T-cell (primary cell): ENCODE measurements at regions of chr2 and their contacts with region 1.

Region 1: GRCh38 chr2:136176722-136177397 is 58.9 kb upstream of the CXCR4 start:
- DNase-seq: no peak
- ATAC-seq: no peak
- H3K4me3 ChIP-seq: no peak overlapping the region
- H3K4me3 Mint-ChIP-seq: no peak overlapping the region
- H3K27ac ChIP-seq: no peak overlapping the region
- H3K27ac Mint-ChIP-seq: no peak overlapping the region
- H3K4me1 ChIP-seq: peaks cover 0 to 6% of the 10 kb centered on the region in 2 experiments
- H3K4me1 Mint-ChIP-seq: peaks cover 25 to 34% (median 33%) of the 10 kb centered on the region in 3 donors
- H3K27me3 ChIP-seq: no peaks in the 10 kb centered on the region
- H3K27me3 Mint-ChIP-seq: no peaks in the 10 kb centered on the region

Region 2: DNA sequence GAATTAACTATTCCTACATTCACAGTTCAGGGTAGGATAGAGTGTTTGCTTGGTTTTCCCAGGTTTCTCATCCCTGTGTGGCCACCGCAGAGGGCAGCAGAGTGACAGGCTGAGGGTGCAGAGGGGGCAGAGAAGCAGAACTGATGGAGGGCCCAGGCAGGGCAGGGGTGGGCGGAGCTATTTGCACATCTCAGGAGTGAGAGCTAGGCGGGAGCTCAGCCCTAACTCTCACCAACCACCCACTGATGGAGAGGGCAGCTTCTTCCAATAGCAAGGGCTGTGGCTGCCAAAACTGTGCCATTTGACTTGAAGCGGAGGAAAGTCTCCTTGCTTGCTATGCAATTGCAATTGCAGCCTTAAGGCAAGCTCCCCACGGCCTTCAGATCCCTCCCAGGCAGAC is 179.5 kb before region 1 on chr2:
- CTCF ChIA-PET with region 1: no interaction called
- POLR2A ChIA-PET with region 1: no interaction called
- DNase-seq: peak in 5 of 35 experiments; percentile 5 to 21 (median 14)
- ATAC-seq: peak; percentile 42 to 57 (median 50)
- H3K4me3 ChIP-seq: no peak overlapping the region
- H3K4me3 Mint-ChIP-seq: no peak overlapping the region
- H3K27ac ChIP-seq: no peak overlapping the region
- H3K27ac Mint-ChIP-seq: no peak overlapping the region
- H3K4me1 ChIP-seq: peaks cover 0 to 5% of the 10 kb centered on the region in 2 experiments
- H3K4me1 Mint-ChIP-seq: peaks cover 14 to 29% (median 22%) of the 10 kb centered on the region in 3 donors
- H3K27me3 ChIP-seq: no peaks in the 10 kb centered on the region
- H3K27me3 Mint-ChIP-seq: no peaks in the 10 kb centered on the region

Region 3: DNA sequence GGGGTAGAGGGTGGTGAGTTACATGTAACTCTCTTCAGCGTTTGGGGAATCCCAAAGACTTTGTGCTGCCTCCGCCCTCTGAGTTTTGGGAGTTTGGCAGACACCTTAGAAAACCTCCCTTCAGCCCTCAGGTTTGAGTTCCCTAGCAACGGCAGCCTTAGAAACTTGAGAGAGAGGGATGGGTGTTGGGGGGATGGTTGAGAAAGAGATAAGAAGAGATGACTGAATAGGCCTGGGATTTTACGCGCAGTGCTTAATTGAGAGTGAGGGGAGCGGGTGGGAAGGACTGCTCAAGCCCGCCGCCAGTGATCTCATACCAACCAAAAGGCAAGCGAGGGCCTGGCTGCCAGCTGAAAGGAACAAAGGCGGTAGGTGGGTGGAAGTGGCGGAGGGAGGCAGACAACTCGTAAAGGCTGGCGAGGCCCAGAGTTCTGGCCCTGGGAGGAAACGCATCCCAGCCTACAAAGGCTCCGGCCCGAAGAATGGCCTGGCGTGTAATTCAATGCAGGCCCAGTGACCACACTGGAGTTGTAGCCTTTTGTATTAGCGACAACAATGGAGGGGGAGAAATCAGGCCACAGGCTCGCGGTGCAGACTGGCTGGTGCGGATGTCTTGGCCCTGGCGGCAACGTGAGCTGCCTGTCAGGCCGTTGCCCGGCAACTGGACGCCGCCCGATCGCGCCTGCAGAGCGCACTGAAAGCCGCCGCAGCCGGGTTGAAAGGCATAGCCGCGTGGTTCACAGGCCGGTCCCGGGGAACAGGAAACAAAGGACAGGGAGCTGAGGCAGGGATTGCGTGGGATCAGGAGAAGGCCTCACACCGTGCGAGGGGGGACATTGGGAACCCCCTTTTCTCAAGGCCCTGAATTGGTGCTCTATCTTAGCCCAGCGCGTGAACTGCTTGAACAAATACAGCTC is 151.5 kb before region 1 on chr2:
- CTCF ChIA-PET with region 1: no interaction called
- POLR2A ChIA-PET with region 1: no interaction called
- DNase-seq: peak in 14 of 35 experiments; percentile 2 to 52 (median 20)
- ATAC-seq: peak; percentile 40 to 92 (median 62)
- H3K4me3 ChIP-seq: peak overlapping the region in 1 of 2 donors; percentile 15
- H3K4me3 Mint-ChIP-seq: peak overlapping the region in 2 of 3 donors; percentile 42 to 64
- H3K27ac ChIP-seq: no peak overlapping the region
- H3K27ac Mint-ChIP-seq: peak overlapping the region in 1 of 2 donors; percentile 24
- H3K4me1 ChIP-seq: peaks cover 3 to 8% of the 10 kb centered on the region in 2 experiments
- H3K4me1 Mint-ChIP-seq: peaks cover 2 to 13% (median 12%) of the 10 kb centered on the region in 3 donors
- H3K27me3 ChIP-seq: peaks cover 0 to 8% of the 10 kb centered on the region in 2 experiments
- H3K27me3 Mint-ChIP-seq: no peaks in the 10 kb centered on the region

Region 4: DNA sequence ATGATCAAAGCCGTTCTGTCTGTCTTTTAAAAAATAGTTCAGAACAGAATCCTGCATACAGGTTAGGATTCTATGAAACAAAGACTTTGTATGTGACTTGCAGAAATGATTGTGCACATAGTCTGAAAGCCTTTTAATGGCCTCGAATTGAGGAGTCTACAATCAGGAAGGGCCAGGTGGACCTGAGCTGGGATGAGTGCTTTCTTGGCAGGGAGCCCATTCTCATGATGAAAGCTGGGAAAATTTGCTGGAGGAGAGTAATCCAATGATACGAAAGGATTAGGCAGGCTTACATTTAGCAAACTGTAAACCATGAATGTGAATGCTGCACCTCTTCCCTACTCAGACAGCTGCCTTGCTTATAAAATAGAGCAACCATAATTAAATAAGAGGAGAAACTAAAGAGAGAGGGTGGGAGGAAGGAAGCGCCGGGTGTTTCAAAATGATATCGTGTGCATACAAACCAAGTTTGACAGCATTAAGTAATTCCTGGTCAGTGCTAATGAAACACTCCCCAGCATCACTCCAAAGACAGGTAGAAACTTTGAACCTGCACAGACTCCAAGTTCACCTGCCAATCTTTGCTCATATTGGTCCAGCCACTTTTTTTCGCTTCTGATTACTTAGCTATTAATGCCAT is 35.2 kb before region 1 on chr2:
- CTCF ChIA-PET with region 1: interaction called in 1 of 2 experiments, 12 read pairs
- POLR2A ChIA-PET with region 1: no interaction called
- DNase-seq: no peak
- ATAC-seq: no peak
- H3K4me3 ChIP-seq: no peak overlapping the region
- H3K4me3 Mint-ChIP-seq: peak overlapping the region in 1 of 3 donors; percentile 42
- H3K27ac ChIP-seq: peak overlapping the region; percentile 100
- H3K27ac Mint-ChIP-seq: peak overlapping the region; percentile 86 to 96
- H3K4me1 ChIP-seq: peaks cover 23 to 45% of the 10 kb centered on the region in 2 experiments
- H3K4me1 Mint-ChIP-seq: peaks cover 65 to 87% (median 71%) of the 10 kb centered on the region in 3 donors
- H3K27me3 ChIP-seq: no peaks in the 10 kb centered on the region
- H3K27me3 Mint-ChIP-seq: no peaks in the 10 kb centered on the region